Stomach (tissue), 19 donors: ENCODE measurements at regions of chr1 and their contacts with region 1.

Region 1: GRCh38 chr1:155167166-155168104 is 5.7 kb downstream of the KRTCAP2 start:
- DNase-seq: peak; percentile 92 to 95
- H3K4me3 ChIP-seq: peak overlapping the region in 2 of 4 donors; percentile 7 to 24
- H3K27ac ChIP-seq: peak overlapping the region; percentile 41 to 74 (median 57)
- H3K4me1 ChIP-seq: peaks cover 19 to 39% (median 26%) of the 10 kb centered on the region in 4 donors
- H3K27me3 ChIP-seq: peaks cover 0 to 5% (median 0%) of the 10 kb centered on the region in 3 donors
- CTCF ChIP-seq: peak in 5 of 7 experiments; percentile 68 to 96 (median 82)
- EP300 ChIP-seq: no peak
- POLR2A ChIP-seq: no peak

Region 2: GRCh38 chr1:154361357-154361756 is 806.1 kb before region 1 on chr1:
- intact Hi-C with region 1: no loop called
- DNase-seq: no peak
- H3K4me3 ChIP-seq: no peak overlapping the region
- H3K27ac ChIP-seq: no peak overlapping the region
- H3K4me1 ChIP-seq: no peaks in the 10 kb centered on the region
- H3K27me3 ChIP-seq: no peaks in the 10 kb centered on the region
- CTCF ChIP-seq: no peak
- EP300 ChIP-seq: no peak
- POLR2A ChIP-seq: no peak

Region 3: GRCh38 chr1:154689070-154689469 is 478.4 kb before region 1 on chr1:
- intact Hi-C with region 1: no loop called
- DNase-seq: no peak
- H3K4me3 ChIP-seq: no peak overlapping the region
- H3K27ac ChIP-seq: no peak overlapping the region
- H3K4me1 ChIP-seq: no peaks in the 10 kb centered on the region
- H3K27me3 ChIP-seq: peaks cover 0 to 8% (median 0%) of the 10 kb centered on the region in 3 donors
- CTCF ChIP-seq: no peak
- EP300 ChIP-seq: no peak
- POLR2A ChIP-seq: no peak

Region 4: GRCh38 chr1:155091071-155091709 is 76.2 kb before region 1 on chr1:
- intact Hi-C with region 1: loop called (anchors 5 kb)
- DNase-seq: peak; percentile 84 to 92
- H3K4me3 ChIP-seq: no peak overlapping the region
- H3K27ac ChIP-seq: no peak overlapping the region
- H3K4me1 ChIP-seq: peaks cover 17 to 28% (median 24%) of the 10 kb centered on the region in 4 donors
- H3K27me3 ChIP-seq: no peaks in the 10 kb centered on the region
- CTCF ChIP-seq: peak in 6 of 7 experiments; percentile 91 to 99 (median 98)
- EP300 ChIP-seq: no peak
- POLR2A ChIP-seq: no peak